ENCODE measurements at regions of chr4 and their contacts with region 1.

Region 1: DNA sequence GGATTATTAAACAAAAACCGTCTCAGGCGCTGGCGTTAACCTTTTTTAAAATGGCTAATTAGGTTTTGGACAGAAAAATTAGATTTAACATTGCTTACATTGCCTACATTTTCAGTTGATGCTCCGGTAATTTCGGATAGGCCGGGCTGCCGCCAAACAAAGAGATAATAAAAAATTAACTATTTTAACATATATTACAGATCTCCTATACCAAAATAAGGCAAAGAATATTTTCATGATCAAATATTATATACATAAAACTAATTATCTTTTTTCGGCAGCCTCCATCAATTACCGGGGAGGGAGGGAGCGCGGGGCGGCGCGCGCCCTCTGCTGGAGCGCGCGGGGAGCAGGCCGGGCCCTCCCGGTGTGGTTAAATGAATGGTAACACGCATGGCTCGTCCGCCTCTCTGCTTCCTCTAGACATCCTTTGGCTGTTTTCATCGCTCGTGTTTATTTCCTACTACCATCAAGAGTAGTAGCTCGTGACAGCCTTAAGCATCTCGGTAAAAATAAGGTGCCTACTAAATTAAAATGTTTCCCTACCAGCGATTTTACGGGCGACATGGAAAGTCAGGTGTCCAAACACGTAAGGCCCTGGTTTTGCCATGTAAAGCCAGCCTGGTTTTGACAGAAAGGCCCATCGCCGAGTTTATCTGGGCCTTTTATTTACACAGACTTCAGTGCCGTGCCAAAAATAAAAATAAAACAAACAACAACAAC is 52.4 kb upstream of the TMEM33 start:
- DNase-seq: peak; percentile 24 to 49
- ATAC-seq: peak; percentile 52 to 89 (median 82)
- H3K4me3 ChIP-seq: peak overlapping the region; percentile 16 to 48 (median 40)
- H3K27ac ChIP-seq: no peak overlapping the region
- H3K4me1 ChIP-seq: peaks cover 8 to 37% (median 28%) of the 10 kb centered on the region in 9 donors
- H3K27me3 ChIP-seq: peaks cover 8 to 98% (median 87%) of the 10 kb centered on the region in 7 donors
- CTCF ChIP-seq: peak; percentile 78 to 98 (median 96)

Region 2: GRCh38 chr4:41257257-41257901 is 625.4 kb before region 1 on chr4:
- intact Hi-C with region 1: loop called in 2 of 10 experiments (anchors 10 kb)
- DNase-seq: peak; percentile 9 to 42
- ATAC-seq: peak; percentile 63 to 83 (median 72)
- H3K4me3 ChIP-seq: peak overlapping the region; percentile 16 to 62 (median 58)
- H3K27ac ChIP-seq: no peak overlapping the region
- H3K4me1 ChIP-seq: peaks cover 8 to 21% (median 16%) of the 10 kb centered on the region in 9 donors
- H3K27me3 ChIP-seq: peaks cover 0 to 63% (median 20%) of the 10 kb centered on the region in 7 donors
- CTCF ChIP-seq: peak in 1 of 9 donors; percentile 11

Region 3: DNA sequence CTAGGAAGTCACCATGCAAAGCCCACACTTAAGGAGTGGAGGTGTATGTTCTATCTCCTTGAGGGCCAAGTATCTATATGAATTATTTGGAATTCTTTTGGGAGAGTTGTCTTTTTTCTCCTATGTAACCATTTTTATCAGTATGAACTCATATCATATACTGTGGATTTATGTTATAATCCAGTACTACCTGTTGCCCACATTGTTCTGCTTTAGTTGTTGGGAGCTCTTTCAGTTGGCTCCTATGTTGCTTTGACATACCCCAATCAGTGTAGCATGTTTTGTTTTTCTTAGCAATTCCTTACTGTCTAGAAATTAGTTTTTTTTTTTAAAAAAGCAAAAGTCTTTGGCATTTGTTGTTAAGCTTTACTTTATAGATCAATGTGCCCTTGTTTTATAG is 613.1 kb before region 1 on chr4:
- intact Hi-C with region 1: loop called in 1 of 10 experiments (anchors 10 kb)
- DNase-seq: no peak
- ATAC-seq: no peak
- H3K4me3 ChIP-seq: no peak overlapping the region
- H3K27ac ChIP-seq: no peak overlapping the region
- H3K4me1 ChIP-seq: no peaks in the 10 kb centered on the region
- H3K27me3 ChIP-seq: no peaks in the 10 kb centered on the region
- CTCF ChIP-seq: no peak

Region 4: DNA sequence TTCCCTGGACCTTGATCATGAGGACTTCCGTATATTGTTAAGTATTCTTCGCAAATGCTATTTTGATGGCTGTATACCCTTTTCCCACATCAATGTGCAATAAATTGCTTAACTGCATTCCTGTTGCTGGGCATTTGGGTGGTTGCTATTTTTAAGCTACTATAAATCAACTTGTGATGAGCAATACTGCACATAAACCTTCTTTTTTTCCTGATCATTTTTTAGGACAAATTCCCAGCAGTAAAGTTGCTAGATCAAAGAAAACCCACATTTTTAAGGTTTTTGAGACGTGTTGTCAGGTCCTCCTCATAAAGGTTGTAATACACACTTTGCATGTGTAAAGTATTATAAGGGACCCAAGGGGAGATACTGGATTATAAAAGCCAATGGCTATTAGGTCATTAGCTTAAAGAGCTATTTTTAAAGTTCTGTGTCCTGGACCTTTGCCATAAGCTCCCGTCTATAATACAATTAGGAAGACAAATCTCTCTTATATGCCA is 309.2 kb before region 1 on chr4:
- intact Hi-C with region 1: no loop called
- DNase-seq: no peak
- ATAC-seq: no peak
- H3K4me3 ChIP-seq: no peak overlapping the region
- H3K27ac ChIP-seq: peak overlapping the region in 6 of 10 donors; percentile 79 to 87 (median 80)
- H3K4me1 ChIP-seq: peaks cover 0 to 77% (median 61%) of the 10 kb centered on the region in 9 donors
- H3K27me3 ChIP-seq: no peaks in the 10 kb centered on the region
- CTCF ChIP-seq: no peak

Region 5: GRCh38 chr4:41957634-41958033 is 74.8 kb after region 1 on chr4:
- intact Hi-C with region 1: no loop called
- DNase-seq: no peak
- ATAC-seq: no peak
- H3K4me3 ChIP-seq: no peak overlapping the region
- H3K27ac ChIP-seq: no peak overlapping the region
- H3K4me1 ChIP-seq: peaks cover 0 to 5% (median 0%) of the 10 kb centered on the region in 9 donors
- H3K27me3 ChIP-seq: no peaks in the 10 kb centered on the region
- CTCF ChIP-seq: peak in 8 of 9 donors; percentile 15 to 57 (median 45)

Region 6: GRCh38 chr4:42104521-42104920 is 221.7 kb after region 1 on chr4:
- intact Hi-C with region 1: no loop called
- DNase-seq: no peak
- ATAC-seq: no peak
- H3K4me3 ChIP-seq: no peak overlapping the region
- H3K27ac ChIP-seq: no peak overlapping the region
- H3K4me1 ChIP-seq: no peaks in the 10 kb centered on the region
- H3K27me3 ChIP-seq: peaks cover 0 to 17% (median 0%) of the 10 kb centered on the region in 7 donors
- CTCF ChIP-seq: no peak

Measured in heart right ventricle (tissue), 16 donors.